ENCODE measurements at regions of chr2 and their contacts with region 1.

Region 1: DNA sequence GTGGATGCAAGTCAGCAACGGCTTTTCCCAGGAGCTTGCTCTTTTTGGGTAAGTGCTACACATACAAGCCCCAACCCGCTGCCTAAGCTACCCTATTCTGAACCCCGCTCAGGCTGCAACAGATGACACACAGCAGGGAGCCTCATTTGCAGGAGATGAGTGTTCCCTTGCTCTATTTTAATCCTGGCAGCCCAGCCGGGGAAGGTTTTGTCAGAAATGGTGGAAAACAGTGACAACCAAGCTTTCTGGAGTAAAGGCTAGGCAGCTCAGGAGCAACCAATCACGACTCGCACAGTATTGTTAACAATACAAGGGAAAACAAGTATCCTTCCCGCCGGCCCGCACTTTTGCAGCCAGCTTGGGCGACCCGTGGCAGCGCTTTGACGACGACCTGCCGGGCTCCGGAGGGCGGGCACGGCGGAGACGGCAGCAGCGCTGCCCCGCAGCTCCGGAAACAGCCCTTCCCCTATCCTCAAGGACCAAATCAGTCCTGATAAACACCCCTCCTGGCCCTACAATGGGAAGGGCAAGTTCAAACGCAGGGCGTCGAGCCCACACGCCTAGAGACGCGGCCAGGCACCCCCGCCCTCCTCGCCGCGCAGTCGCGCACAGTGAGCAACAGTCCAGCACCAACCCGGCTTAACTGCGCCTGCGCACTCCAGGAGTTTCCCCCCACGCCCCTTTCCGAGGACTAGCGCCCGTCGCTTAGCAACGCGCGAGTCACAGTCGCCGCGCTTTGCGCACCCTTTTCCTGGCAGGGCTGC is 74.3 kb upstream of the TSPYL6 start:
- DNase-seq: peak; percentile 93
- H3K4me3 Mint-ChIP-seq: peak overlapping the region; percentile 83
- H3K27ac Mint-ChIP-seq: no peak overlapping the region
- H3K4me1 Mint-ChIP-seq: peaks cover 17% of the 10 kb centered on the region
- H3K27me3 Mint-ChIP-seq: peaks cover 6% of the 10 kb centered on the region

Region 2: GRCh38 chr2:53913721-53914120 is 416.6 kb before region 1 on chr2:
- CTCF ChIA-PET with region 1: no interaction called
- intact Hi-C with region 1: no loop called
- DNase-seq: peak; percentile 69
- H3K4me3 Mint-ChIP-seq: no peak overlapping the region
- H3K27ac Mint-ChIP-seq: peak overlapping the region; percentile 66
- H3K4me1 Mint-ChIP-seq: peaks cover 15% of the 10 kb centered on the region
- H3K27me3 Mint-ChIP-seq: no peaks in the 10 kb centered on the region

Region 3: GRCh38 chr2:54122939-54123338 is 207.4 kb before region 1 on chr2:
- CTCF ChIA-PET with region 1: no interaction called
- intact Hi-C with region 1: no loop called
- DNase-seq: no peak
- H3K4me3 Mint-ChIP-seq: no peak overlapping the region
- H3K27ac Mint-ChIP-seq: no peak overlapping the region
- H3K4me1 Mint-ChIP-seq: no peaks in the 10 kb centered on the region
- H3K27me3 Mint-ChIP-seq: no peaks in the 10 kb centered on the region

Region 4: GRCh38 chr2:54271843-54272627 is 58.3 kb before region 1 on chr2:
- CTCF ChIA-PET with region 1: no interaction called
- intact Hi-C with region 1: loop called (anchors 2 kb)
- DNase-seq: no peak
- H3K4me3 Mint-ChIP-seq: no peak overlapping the region
- H3K27ac Mint-ChIP-seq: no peak overlapping the region
- H3K4me1 Mint-ChIP-seq: peaks cover 15% of the 10 kb centered on the region
- H3K27me3 Mint-ChIP-seq: no peaks in the 10 kb centered on the region

Region 5: GRCh38 chr2:54455563-54456361 is 125.4 kb after region 1 on chr2 and contains the start of gene SPTBN1:
- CTCF ChIA-PET with region 1: no interaction called
- intact Hi-C with region 1: loop called (anchors 5 kb)
- DNase-seq: peak; percentile 34
- H3K4me3 Mint-ChIP-seq: peak within 1 kb of the TSS; percentile 77
- H3K27ac Mint-ChIP-seq: no peak within 1 kb of the TSS
- H3K4me1 Mint-ChIP-seq: peaks cover 13% of the 10 kb centered on the region
- H3K27me3 Mint-ChIP-seq: peaks cover 38% of the 10 kb centered on the region
- total RNA-seq, gene SPTBN1: 103 to 107 TPM

Region 6: DNA sequence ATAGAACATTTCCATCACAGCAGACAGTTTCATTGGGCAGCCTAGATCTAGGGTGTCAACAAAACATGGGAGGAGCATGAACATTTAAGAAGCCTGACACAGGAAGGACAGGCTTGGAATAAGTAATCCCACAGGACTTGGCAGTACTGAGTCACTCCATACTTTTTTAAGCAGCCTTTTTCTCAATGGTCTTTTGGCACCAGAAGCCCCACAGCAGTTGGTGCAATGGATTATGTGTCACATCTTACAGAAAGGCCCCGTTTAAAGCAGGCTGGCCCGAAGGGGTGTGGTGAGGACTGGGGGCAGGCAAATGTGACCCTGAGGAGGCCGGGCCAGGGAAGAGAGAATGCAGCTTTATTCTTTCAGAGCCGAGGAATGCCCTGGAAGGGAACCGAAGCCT is 152.4 kb after region 1 on chr2:
- CTCF ChIA-PET with region 1: no interaction called
- intact Hi-C with region 1: no loop called
- DNase-seq: no peak
- H3K4me3 Mint-ChIP-seq: no peak overlapping the region
- H3K27ac Mint-ChIP-seq: no peak overlapping the region
- H3K4me1 Mint-ChIP-seq: no peaks in the 10 kb centered on the region
- H3K27me3 Mint-ChIP-seq: peaks cover 3% of the 10 kb centered on the region